Caco-2 (cell line): ENCODE measurements at regions of chr17 and their contacts with region 1.

Region 1: DNA sequence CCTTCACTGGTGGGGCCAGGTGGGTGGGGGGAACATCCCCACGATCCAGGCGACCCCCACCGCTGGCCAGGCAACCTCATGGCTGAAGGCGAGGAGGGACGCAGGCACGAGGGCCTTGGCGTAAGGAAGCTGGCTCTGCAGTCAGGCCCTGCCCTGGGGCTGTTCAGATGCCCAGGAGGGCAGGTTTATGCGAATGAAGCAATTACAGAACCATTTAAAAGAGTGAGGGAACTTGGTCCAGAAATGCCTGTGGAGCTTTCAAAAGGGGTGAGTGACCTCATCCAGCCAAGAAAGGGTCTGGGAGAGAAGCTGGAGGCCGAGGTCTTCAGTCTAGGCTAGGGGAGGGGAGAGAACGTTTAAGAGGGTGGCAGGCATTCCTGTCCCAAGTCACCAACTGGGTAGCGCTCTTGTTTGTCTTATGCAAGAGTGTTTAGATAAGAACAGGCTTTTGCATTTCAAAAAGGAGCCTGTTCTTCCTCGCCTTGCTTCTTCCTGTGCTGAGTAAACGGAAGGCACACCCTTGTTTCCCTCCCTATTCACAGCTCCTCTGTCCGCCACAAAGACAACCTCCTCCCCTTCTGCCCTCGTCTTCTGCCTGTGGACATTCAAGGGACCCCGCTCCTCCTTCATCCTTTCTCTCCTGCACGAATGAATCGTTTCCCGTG is 183.5 kb upstream of the SDK2 start:
- DNase-seq: peak; percentile 47 to 52
- H3K4me3 ChIP-seq: no peak overlapping the region
- H3K4me3 Mint-ChIP-seq: peak overlapping the region; percentile 22
- H3K27ac Mint-ChIP-seq: peak overlapping the region; percentile 60
- H3K4me1 ChIP-seq: peaks cover 12% of the 10 kb centered on the region
- H3K4me1 Mint-ChIP-seq: peaks cover 21% of the 10 kb centered on the region
- H3K27me3 ChIP-seq: no peaks in the 10 kb centered on the region
- H3K27me3 Mint-ChIP-seq: no peaks in the 10 kb centered on the region
- CTCF ChIP-seq: no peak

Region 2: DNA sequence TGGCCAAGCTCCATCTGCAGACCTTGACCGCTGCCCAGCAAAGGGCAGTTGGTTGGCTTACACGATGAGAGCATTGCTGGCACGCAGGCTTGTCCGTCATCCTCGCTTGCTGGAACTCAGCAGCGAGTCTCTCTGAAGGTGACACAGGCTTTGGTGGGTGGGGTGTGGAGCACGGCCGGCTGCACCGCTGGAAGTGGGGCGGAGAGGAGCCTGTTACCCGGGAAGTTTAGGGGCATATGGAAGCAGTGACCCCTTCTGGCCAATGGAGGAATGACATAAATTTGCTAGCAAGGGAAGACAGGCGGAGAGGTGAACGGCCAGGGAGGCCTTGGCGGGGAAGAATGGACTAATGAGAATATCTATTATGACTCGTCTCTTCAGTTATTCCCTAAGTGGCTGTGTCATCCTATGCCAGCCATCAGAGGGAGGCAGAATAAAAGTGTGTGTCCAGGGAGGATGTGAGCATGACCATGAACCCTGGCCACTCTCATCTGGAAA is 117.6 kb before region 1 on chr17:
- CTCF ChIA-PET with region 1: no interaction called
- POLR2A ChIA-PET with region 1: no interaction called
- intact Hi-C with region 1: no loop called
- DNase-seq: peak in 1 of 2 experiments; percentile 67
- H3K4me3 ChIP-seq: no peak overlapping the region
- H3K4me3 Mint-ChIP-seq: no peak overlapping the region
- H3K27ac Mint-ChIP-seq: no peak overlapping the region
- H3K4me1 ChIP-seq: no peaks in the 10 kb centered on the region
- H3K4me1 Mint-ChIP-seq: no peaks in the 10 kb centered on the region
- H3K27me3 ChIP-seq: peaks cover 2% of the 10 kb centered on the region; the same call in 1 of the 2 replicates
- H3K27me3 Mint-ChIP-seq: peaks cover 11% of the 10 kb centered on the region
- CTCF ChIP-seq: peak; percentile 71 to 77

Region 3: DNA sequence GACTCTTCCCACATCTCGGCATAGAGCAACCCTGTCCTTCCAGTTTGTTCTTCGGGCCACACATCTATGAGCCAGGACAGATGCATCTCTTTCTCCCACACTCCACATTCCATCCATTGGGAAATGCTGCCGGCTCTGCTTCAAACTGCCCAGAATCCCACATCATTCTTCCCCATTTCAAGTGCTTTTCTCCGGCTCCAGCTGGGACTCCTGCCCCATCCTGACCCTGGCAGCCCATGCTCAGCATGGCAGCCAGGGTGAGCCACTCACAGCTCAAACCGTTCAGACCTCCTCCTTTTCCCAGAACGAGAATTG is 50.7 kb before region 1 on chr17:
- CTCF ChIA-PET with region 1: no interaction called
- POLR2A ChIA-PET with region 1: no interaction called
- intact Hi-C with region 1: loop called (anchors 2 kb)
- DNase-seq: peak in 1 of 2 experiments; percentile 24
- H3K4me3 ChIP-seq: no peak overlapping the region
- H3K4me3 Mint-ChIP-seq: no peak overlapping the region
- H3K27ac Mint-ChIP-seq: no peak overlapping the region
- H3K4me1 ChIP-seq: no peaks in the 10 kb centered on the region
- H3K4me1 Mint-ChIP-seq: no peaks in the 10 kb centered on the region
- H3K27me3 ChIP-seq: no peaks in the 10 kb centered on the region
- H3K27me3 Mint-ChIP-seq: no peaks in the 10 kb centered on the region
- CTCF ChIP-seq: no peak

Region 4: DNA sequence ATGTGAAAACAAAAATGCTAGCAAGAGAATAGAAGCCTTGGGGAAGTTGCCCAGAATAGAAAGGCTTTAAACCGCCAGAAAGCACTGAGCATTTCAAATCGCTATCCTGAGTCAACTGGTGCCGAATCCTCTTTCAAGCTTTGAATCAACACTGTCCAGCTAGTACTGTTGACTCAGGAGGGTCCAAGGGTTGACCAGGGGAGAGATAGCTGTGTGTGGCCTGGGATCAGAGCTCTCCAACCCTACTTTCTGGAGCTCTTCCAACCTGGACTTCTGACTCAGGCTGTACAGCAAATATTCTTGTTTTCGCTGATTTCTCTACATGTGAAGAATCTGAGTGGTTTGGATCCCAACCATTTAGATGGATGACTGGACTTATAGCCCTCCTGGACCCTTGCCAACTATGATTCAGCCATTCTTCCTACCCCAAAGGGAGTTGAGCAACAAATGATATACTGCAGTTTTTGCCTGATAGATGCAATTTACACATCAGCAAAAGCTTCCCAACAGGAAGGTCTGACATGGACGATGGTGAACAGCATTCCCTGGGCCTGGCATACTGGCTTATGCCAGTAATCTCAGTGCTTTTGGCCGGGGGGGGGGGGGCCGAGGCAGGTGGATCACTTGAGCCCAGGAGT is 29.5 kb before region 1 on chr17:
- CTCF ChIA-PET with region 1: interaction called, 6 read pairs
- POLR2A ChIA-PET with region 1: no interaction called
- intact Hi-C with region 1: loop called (anchors 1 kb)
- DNase-seq: peak; percentile 88 to 91
- H3K4me3 ChIP-seq: no peak overlapping the region
- H3K4me3 Mint-ChIP-seq: peak overlapping the region; percentile 43
- H3K27ac Mint-ChIP-seq: peak overlapping the region; percentile 67
- H3K4me1 ChIP-seq: peaks cover 52% of the 10 kb centered on the region
- H3K4me1 Mint-ChIP-seq: peaks cover 28% of the 10 kb centered on the region
- H3K27me3 ChIP-seq: no peaks in the 10 kb centered on the region
- H3K27me3 Mint-ChIP-seq: no peaks in the 10 kb centered on the region
- CTCF ChIP-seq: no peak